Activated CD8-positive, alpha-beta T cell treated with anti-CD3 and anti-CD28 coated beads for 36 hours (primary cell): ENCODE measurements at regions of chr2 and their contacts with region 1.

Region 1: GRCh38 chr2:118088051-118089024 is at the start of gene INSIG2:
- DNase-seq: peak; percentile 99
- ATAC-seq: peak; percentile 94
- H3K4me3 Mint-ChIP-seq: peak within 1 kb of the TSS; percentile 67
- H3K27ac Mint-ChIP-seq: peak within 1 kb of the TSS; percentile 92
- H3K4me1 Mint-ChIP-seq: peaks cover 28% of the 10 kb centered on the region
- H3K27me3 Mint-ChIP-seq: peaks cover 4% of the 10 kb centered on the region
- CTCF ChIP-seq: peak; percentile 35
- total RNA-seq, gene INSIG2: 87.2 to 104 TPM

Region 2: DNA sequence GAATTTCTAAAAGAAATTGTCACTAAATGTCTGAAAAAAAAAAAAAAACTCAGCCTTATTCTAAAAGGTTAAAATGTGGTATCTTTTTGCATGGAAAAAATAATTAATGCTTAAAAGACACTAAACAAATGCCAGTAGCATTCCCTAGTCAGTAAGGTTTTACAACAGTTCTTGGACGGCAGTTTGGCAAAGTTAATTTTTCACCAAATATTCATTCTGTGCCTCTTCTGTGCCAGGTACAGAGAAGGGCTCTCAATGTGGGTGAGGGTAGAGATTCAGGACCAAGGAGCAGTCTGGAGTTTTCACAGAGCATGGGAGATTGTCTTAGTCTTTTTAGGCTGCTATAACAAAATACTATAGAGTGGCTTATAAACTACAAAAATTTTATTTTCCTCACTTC is 68.5 kb before region 1 on chr2:
- CTCF ChIA-PET with region 1: no interaction called
- POLR2A ChIA-PET with region 1: no interaction called
- intact Hi-C with region 1: loop called (anchors 5 kb)
- DNase-seq: no peak
- ATAC-seq: no peak
- H3K4me3 Mint-ChIP-seq: no peak overlapping the region
- H3K27ac Mint-ChIP-seq: no peak overlapping the region
- H3K4me1 Mint-ChIP-seq: peaks cover 10% of the 10 kb centered on the region
- H3K27me3 Mint-ChIP-seq: peaks cover 2% of the 10 kb centered on the region
- CTCF ChIP-seq: no peak

Region 3: GRCh38 chr2:118032169-118033013 is 55.9 kb before region 1 on chr2:
- CTCF ChIA-PET with region 1: interaction called, 10 read pairs
- POLR2A ChIA-PET with region 1: no interaction called
- intact Hi-C with region 1: no loop called
- DNase-seq: peak; percentile 70
- ATAC-seq: peak; percentile 88
- H3K4me3 Mint-ChIP-seq: no peak overlapping the region
- H3K27ac Mint-ChIP-seq: no peak overlapping the region
- H3K4me1 Mint-ChIP-seq: no peaks in the 10 kb centered on the region
- H3K27me3 Mint-ChIP-seq: peaks cover 27% of the 10 kb centered on the region
- CTCF ChIP-seq: peak; percentile 74

Region 4: GRCh38 chr2:118251427-118251826 is 163.1 kb after region 1 on chr2:
- CTCF ChIA-PET with region 1: no interaction called
- POLR2A ChIA-PET with region 1: no interaction called
- intact Hi-C with region 1: no loop called
- DNase-seq: no peak
- ATAC-seq: no peak
- H3K4me3 Mint-ChIP-seq: no peak overlapping the region
- H3K27ac Mint-ChIP-seq: no peak overlapping the region
- H3K4me1 Mint-ChIP-seq: no peaks in the 10 kb centered on the region
- H3K27me3 Mint-ChIP-seq: peaks cover 14% of the 10 kb centered on the region
- CTCF ChIP-seq: no peak